ENCODE measurements at regions of chr12 and their contacts with region 1.

Region 1: DNA sequence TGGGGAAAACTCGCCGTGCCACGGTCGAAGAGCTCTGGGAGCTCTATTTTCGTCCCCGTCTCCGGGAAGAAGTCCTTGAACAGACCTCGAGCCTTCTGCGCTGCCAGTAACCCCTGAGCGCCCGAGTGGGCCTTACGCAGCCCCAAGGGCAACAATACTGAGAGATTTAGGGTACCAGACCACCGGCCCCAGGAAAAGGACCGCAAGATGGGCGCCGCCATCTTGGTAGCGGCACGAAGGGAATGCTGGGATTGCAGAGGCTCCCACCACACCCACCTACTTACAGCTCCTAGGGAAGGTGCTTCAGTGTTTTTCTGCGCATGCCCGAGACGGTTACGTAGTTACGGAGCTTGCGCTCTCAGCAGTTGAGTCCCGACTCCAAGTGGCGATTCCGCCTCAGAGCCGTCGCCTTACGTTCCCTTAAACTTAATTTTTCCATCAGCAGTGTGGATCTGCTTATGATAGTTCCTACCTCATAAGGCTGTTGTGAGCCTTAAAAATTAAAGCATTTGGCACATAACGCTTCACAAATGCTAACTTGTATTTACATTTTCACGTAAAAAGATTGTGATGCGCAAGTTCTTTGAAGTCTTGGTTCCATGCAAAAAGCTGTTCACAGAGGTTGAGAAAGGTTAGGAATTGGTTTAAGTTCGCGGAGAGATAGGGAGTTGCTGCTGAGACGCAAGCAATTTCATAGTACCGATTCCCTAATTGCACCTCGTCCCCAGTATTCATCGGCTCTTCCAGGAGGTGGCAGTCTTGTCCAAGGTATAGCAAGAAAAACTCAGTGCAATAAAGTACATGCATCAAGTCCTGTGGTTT is at the start of gene YARS2:
- DNase-seq: peak; percentile 79 to 99
- ATAC-seq: peak; percentile 92 to 98
- H3K4me3 ChIP-seq: peak within 1 kb of the TSS; percentile 70
- H3K27ac ChIP-seq: peak within 1 kb of the TSS; percentile 96
- H3K4me1 ChIP-seq: peaks cover 13% of the 10 kb centered on the region
- CTCF ChIP-seq: peak; percentile 98
- EP300 ChIP-seq: no peak
- POLR2A ChIP-seq: peak; percentile 95
- RAD21 ChIP-seq: peak; percentile 97 to 99
- polyA plus RNA-seq, gene YARS2: 39.2 and 43.2 TPM in 2 replicates

Region 2: GRCh38 chr12:32399337-32400113 is 356.3 kb before region 1 on chr12 and contains the start of gene FGD4:
- CTCF ChIA-PET with region 1: interaction called, 11 read pairs
- POLR2A ChIA-PET with region 1: no interaction called
- DNase-seq: peak; percentile 88 to 91
- ATAC-seq: peak; percentile 94 to 97
- H3K4me3 ChIP-seq: peak within 1 kb of the TSS; percentile 83
- H3K27ac ChIP-seq: peak within 1 kb of the TSS; percentile 85 to 88
- H3K4me1 ChIP-seq: peaks cover 15% of the 10 kb centered on the region; the same call in 2 of the 3 replicates
- CTCF ChIP-seq: peak; percentile 64
- EP300 ChIP-seq: no peak
- POLR2A ChIP-seq: peak; percentile 55
- RAD21 ChIP-seq: peak; percentile 49 to 67
- polyA plus RNA-seq, gene FGD4: 5.6 and 6.0 TPM in 2 replicates

Region 3: GRCh38 chr12:32737715-32738114 is 18.1 kb before region 1 on chr12:
- CTCF ChIA-PET with region 1: interaction called, 10 read pairs
- POLR2A ChIA-PET with region 1: interaction called, 8 read pairs
- DNase-seq: no peak
- ATAC-seq: no peak
- H3K4me3 ChIP-seq: no peak overlapping the region
- H3K27ac ChIP-seq: no peak overlapping the region
- H3K4me1 ChIP-seq: no peaks in the 10 kb centered on the region
- CTCF ChIP-seq: no peak
- EP300 ChIP-seq: no peak
- POLR2A ChIP-seq: no peak
- RAD21 ChIP-seq: no peak

Region 4: GRCh38 chr12:32765906-32766305 is 10.0 kb after region 1 on chr12:
- CTCF ChIA-PET with region 1: interaction called, 15 read pairs
- POLR2A ChIA-PET with region 1: no interaction called
- DNase-seq: no peak
- ATAC-seq: no peak
- H3K4me3 ChIP-seq: no peak overlapping the region
- H3K27ac ChIP-seq: no peak overlapping the region
- H3K4me1 ChIP-seq: no peaks in the 10 kb centered on the region
- CTCF ChIP-seq: no peak
- EP300 ChIP-seq: no peak
- POLR2A ChIP-seq: no peak
- RAD21 ChIP-seq: no peak

Region 5: DNA sequence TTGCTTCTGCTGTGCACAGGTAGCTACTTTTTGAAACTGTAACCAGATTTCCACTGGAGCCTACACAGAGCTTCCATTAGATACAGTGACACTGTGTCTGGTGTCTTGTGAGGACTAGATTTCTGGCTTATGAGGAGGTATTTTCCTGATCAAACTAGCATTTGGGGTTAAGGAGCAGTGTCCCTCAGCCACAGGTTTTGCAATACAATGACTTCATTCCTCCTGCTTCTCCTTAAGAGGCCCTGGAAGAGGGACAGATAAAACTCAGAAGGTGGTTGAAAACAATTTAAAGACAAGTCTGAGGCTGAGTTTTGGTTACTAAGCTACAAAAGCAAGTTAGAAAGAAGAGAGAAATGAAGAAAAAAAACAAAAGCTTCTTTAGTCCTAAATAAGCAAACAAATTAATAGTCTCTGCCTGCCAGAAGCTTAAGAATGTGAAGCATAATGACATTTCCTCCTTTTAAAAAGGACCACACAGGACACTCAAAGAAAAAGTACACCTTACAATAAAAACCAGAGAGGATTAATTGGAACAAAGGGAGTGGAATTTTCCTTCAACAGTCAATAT is 87.7 kb after region 1 on chr12:
- CTCF ChIA-PET with region 1: no interaction called
- POLR2A ChIA-PET with region 1: no interaction called
- DNase-seq: no peak
- ATAC-seq: peak in 1 of 2 experiments; percentile 34; a peak in 1 of 6 replicates
- H3K4me3 ChIP-seq: no peak overlapping the region
- H3K27ac ChIP-seq: no peak overlapping the region
- H3K4me1 ChIP-seq: 0 out of 3 replicates have a peak, but pooled peaks cover 3% of the 10 kb centered on the region
- CTCF ChIP-seq: no peak
- EP300 ChIP-seq: no peak
- POLR2A ChIP-seq: no peak
- RAD21 ChIP-seq: no peak

Region 6: GRCh38 chr12:32896432-32897273 is 140.8 kb after region 1 on chr12 and contains the start of gene PKP2:
- CTCF ChIA-PET with region 1: interaction called, 7 read pairs
- POLR2A ChIA-PET with region 1: interaction called, 11 read pairs
- DNase-seq: peak; percentile 49 to 56
- ATAC-seq: peak; percentile 76 to 85
- H3K4me3 ChIP-seq: peak within 1 kb of the TSS; percentile 70
- H3K27ac ChIP-seq: peak within 1 kb of the TSS; percentile 67 to 82
- H3K4me1 ChIP-seq: peaks cover 33% of the 10 kb centered on the region
- CTCF ChIP-seq: no peak
- EP300 ChIP-seq: no peak
- POLR2A ChIP-seq: peak; percentile 33; the same call in 1 of the 2 replicates
- RAD21 ChIP-seq: no peak
- polyA plus RNA-seq, gene PKP2: 6.5 and 7.1 TPM in 2 replicates

Region 7: DNA sequence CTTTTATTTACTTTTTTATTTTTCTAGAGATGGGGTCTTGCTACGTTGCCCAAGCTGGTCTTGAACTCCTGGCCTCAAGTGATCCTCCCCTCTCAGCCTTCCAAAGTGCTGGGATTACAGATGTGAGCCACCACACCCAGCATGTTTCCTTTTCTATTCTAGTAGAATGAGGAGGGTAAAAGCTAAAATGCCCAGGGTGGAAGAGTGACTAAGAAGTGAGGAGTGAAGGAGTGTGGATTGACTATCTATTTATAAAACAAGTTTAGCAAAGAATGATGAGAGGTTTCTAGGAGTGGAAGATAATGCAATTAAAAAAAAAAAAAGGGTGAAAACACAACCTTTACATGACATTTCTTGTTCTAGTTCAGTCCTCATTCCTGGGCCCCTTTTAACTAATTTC is 170.5 kb after region 1 on chr12:
- CTCF ChIA-PET with region 1: interaction called, 15 read pairs
- POLR2A ChIA-PET with region 1: interaction called, 4 read pairs
- DNase-seq: no peak
- ATAC-seq: no peak
- H3K4me3 ChIP-seq: no peak overlapping the region
- H3K27ac ChIP-seq: no peak overlapping the region
- H3K4me1 ChIP-seq: peaks cover 7% of the 10 kb centered on the region
- CTCF ChIP-seq: no peak
- EP300 ChIP-seq: no peak
- POLR2A ChIP-seq: no peak
- RAD21 ChIP-seq: no peak